ENCODE measurements at regions of chr10 and their contacts with region 1.

Region 1: GRCh38 chr10:99612167-99612831 is 7.9 kb downstream of the SLC25A28 start:
- DNase-seq: no peak
- H3K4me3 ChIP-seq: no peak overlapping the region
- H3K27ac ChIP-seq: no peak overlapping the region; the same call in 1 of the 2 replicates
- H3K4me1 ChIP-seq: no peaks in the 10 kb centered on the region
- H3K27me3 ChIP-seq: no peaks in the 10 kb centered on the region
- CTCF ChIP-seq: peak in 2 of 3 experiments; percentile 83 to 89; a peak in 3 of 4 replicates
- EP300 ChIP-seq: no peak
- POLR2A ChIP-seq: no peak
- RAD21 ChIP-seq: peak; percentile 95 to 96

Region 2: DNA sequence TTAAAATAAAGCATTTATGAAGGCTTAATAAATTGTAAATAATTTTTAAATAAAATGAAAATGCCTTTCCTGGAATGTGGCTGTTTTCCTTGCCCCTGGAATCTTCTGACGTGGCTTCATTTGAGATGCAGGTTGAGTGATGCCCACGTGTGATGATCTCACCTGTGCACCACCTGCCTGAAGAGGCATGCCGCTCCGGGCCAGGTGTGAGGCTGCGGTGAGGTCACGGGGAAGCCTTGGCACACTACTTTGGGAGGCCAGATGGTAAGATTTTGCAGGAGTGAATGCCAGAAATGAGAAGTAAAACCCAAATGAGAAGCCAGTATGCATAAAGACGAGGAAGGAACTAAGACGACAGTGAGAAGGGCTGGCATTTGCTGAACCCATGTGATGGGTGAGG is 218.0 kb before region 1 on chr10:
- CTCF ChIA-PET with region 1: interaction called, 21 read pairs
- POLR2A ChIA-PET with region 1: no interaction called
- DNase-seq: no peak
- H3K4me3 ChIP-seq: no peak overlapping the region
- H3K27ac ChIP-seq: no peak overlapping the region
- H3K4me1 ChIP-seq: peaks cover 3 to 18% (median 11%) of the 10 kb centered on the region in 4 experiments; a peak in 6 of 7 replicates
- H3K27me3 ChIP-seq: no peaks in the 10 kb centered on the region
- CTCF ChIP-seq: no peak
- EP300 ChIP-seq: no peak
- POLR2A ChIP-seq: no peak
- RAD21 ChIP-seq: no peak

Region 3: GRCh38 chr10:99548041-99548530 is 64.2 kb before region 1 on chr10:
- CTCF ChIA-PET with region 1: interaction called, 13 read pairs
- POLR2A ChIA-PET with region 1: no interaction called
- DNase-seq: no peak
- H3K4me3 ChIP-seq: no peak overlapping the region
- H3K27ac ChIP-seq: no peak overlapping the region
- H3K4me1 ChIP-seq: no peaks in the 10 kb centered on the region; a peak in 1 of 7 replicates
- H3K27me3 ChIP-seq: peaks cover 4 to 33% (median 21%) of the 10 kb centered on the region in 4 experiments
- CTCF ChIP-seq: peak; percentile 62 to 82 (median 78)
- EP300 ChIP-seq: no peak
- POLR2A ChIP-seq: no peak
- RAD21 ChIP-seq: peak; percentile 67 to 77

Region 4: DNA sequence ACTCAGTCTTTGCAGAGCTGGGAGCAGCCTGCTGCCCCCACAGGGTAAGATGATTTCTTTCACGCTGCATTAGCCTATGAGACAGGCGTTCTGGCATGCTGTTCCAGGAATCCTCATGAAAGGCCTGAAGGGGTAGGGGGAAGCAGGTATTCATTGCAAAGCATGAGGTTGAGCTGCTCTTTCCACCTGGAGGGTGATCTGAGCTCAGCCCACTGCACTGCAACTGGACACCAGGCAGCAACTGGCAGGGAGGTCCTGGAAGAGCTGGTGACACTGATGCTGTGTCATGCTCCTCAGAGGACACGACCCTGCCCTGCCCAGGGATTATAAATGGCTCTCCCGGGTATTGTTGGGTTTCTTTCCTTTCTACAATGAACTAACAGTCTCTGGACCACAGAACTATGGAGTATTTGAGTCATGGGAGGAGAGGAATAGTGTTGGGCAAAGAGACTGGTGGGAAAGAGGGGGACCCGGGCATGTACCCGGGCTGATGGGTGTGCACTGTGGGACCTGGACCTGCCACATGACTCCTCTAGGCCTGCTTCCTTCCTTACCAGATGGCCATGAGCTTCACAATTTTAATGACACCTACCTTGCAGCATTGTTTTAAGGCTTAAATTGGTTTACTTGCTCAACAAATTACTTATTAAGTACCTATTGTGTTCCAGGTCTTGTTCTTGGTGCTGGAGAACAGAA is 16.4 kb before region 1 on chr10:
- CTCF ChIA-PET with region 1: interaction called, 83 read pairs
- POLR2A ChIA-PET with region 1: interaction called, 3 read pairs
- DNase-seq: peak; percentile 13 to 47
- H3K4me3 ChIP-seq: no peak overlapping the region
- H3K27ac ChIP-seq: no peak overlapping the region
- H3K4me1 ChIP-seq: peaks cover 0 to 7% (median 4%) of the 10 kb centered on the region in 4 experiments; a peak in 4 of 7 replicates
- H3K27me3 ChIP-seq: peaks cover 0 to 4% (median 1%) of the 10 kb centered on the region in 4 experiments; a peak in 1 of 7 replicates
- CTCF ChIP-seq: no peak
- EP300 ChIP-seq: no peak
- POLR2A ChIP-seq: no peak
- RAD21 ChIP-seq: 0 out of 4 replicates have a peak, but pooled peaks of 1 of the 2 experiments have one; percentile 1

Region 5: GRCh38 chr10:99648717-99649116 is 36.4 kb after region 1 on chr10:
- CTCF ChIA-PET with region 1: no interaction called
- POLR2A ChIA-PET with region 1: no interaction called
- DNase-seq: no peak
- H3K4me3 ChIP-seq: no peak overlapping the region
- H3K27ac ChIP-seq: no peak overlapping the region
- H3K4me1 ChIP-seq: no peaks in the 10 kb centered on the region
- H3K27me3 ChIP-seq: no peaks in the 10 kb centered on the region; a peak in 1 of 7 replicates
- CTCF ChIP-seq: no peak
- EP300 ChIP-seq: no peak
- POLR2A ChIP-seq: no peak
- RAD21 ChIP-seq: no peak

Region 6: GRCh38 chr10:99758211-99758891 is 146.1 kb after region 1 on chr10:
- CTCF ChIA-PET with region 1: no interaction called
- POLR2A ChIA-PET with region 1: no interaction called
- DNase-seq: no peak
- H3K4me3 ChIP-seq: no peak overlapping the region
- H3K27ac ChIP-seq: no peak overlapping the region
- H3K4me1 ChIP-seq: no peaks in the 10 kb centered on the region
- H3K27me3 ChIP-seq: no peaks in the 10 kb centered on the region
- CTCF ChIP-seq: no peak
- EP300 ChIP-seq: no peak
- POLR2A ChIP-seq: no peak
- RAD21 ChIP-seq: no peak

Region 7: GRCh38 chr10:99827936-99828335 is 215.6 kb after region 1 on chr10:
- CTCF ChIA-PET with region 1: no interaction called
- POLR2A ChIA-PET with region 1: no interaction called
- DNase-seq: no peak
- H3K4me3 ChIP-seq: no peak overlapping the region
- H3K27ac ChIP-seq: no peak overlapping the region
- H3K4me1 ChIP-seq: no peaks in the 10 kb centered on the region
- H3K27me3 ChIP-seq: no peaks in the 10 kb centered on the region
- CTCF ChIP-seq: no peak
- EP300 ChIP-seq: no peak
- POLR2A ChIP-seq: no peak
- RAD21 ChIP-seq: no peak